Endothelial cell of umbilical vein (primary cell): ENCODE measurements at regions of chr20 and their contacts with region 1.

Region 1: DNA sequence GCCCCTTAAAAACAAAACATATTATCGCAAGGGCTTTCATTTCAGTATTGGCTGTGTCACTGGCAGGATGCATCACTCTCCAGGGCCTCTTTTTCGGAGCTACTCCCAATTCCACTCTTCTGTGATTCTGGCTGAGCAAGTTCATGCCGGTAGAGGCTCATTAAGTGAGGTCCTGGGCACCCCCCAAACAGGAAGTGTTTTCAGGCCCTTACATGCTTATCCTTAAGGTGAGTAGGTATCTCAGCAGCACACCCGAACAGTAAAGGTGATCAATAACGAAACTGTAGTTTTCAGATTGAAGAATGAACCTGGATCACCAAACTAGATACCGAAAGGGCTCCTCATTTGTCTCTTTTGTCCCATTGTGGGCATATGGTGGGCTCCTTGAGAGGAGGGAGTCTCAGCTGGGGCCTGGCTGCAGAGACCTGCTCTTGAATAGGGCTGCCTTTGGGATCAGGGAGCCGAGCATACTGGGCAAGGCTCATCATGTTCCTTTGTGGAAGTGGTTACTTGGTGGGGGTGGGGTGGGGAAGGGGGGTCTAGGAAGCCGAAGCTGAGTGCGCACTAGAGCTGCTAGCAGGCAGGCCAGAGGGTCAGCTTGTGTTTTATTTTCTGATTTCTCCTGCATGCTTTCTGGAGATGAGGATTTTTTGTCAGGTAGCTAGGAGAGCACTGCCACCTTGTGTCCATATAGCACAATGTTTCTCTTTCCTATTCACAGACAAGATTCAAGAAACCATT is 65.2 kb downstream of the CDS2 start:
- DNase-seq: peak; percentile 79
- H3K4me3 ChIP-seq: no peak overlapping the region
- H3K27ac ChIP-seq: no peak overlapping the region
- H3K4me1 ChIP-seq: peaks cover 3% of the 10 kb centered on the region
- H3K27me3 ChIP-seq: no peaks in the 10 kb centered on the region
- CTCF ChIP-seq: peak; percentile 59 to 64
- POLR2A ChIP-seq: no peak

Region 2: DNA sequence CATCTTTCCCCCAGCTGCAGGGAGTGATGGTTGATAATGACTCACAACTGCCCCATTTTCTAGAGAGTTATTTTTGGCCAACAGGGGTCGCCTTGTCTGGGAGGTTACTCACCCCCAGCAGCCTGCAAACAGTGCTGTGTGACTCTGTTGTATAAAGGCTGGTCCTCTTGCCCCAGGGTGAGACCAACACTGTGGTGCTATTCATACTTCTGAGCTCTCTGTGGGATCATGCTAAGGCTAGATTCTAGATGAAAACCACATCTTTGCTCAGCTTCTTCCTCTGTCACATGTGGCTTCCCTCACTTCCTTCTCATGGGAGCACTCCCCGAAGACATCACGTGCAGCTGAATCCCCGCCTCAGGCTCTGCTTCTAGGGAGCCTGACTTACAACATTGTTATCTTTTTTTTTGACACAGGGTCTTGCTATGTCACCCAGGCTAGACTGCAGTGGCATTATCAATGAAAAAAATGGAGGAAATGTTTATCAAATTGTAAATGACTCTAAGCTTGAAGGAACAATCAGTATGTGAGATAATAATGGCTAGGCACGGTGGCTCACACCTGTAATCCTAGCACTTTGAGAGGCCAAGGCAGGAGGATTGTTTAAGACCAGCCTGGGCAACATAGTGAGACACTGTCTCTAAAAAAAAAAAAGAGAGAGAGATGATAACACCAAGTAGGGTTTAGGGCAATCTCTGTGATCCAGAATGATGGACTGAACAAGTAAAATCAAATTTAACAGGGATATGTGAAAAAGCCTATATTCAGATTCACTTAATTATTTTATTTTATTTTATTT is 135.0 kb before region 1 on chr20:
- CTCF ChIA-PET with region 1: interaction called, 7 read pairs
- POLR2A ChIA-PET with region 1: no interaction called
- dilution Hi-C with region 1: no loop called
- intact Hi-C with region 1: loop called (anchors 1 kb)
- DNase-seq: peak; percentile 23
- H3K4me3 ChIP-seq: no peak overlapping the region
- H3K27ac ChIP-seq: no peak overlapping the region
- H3K4me1 ChIP-seq: peaks cover 6% of the 10 kb centered on the region
- H3K27me3 ChIP-seq: no peaks in the 10 kb centered on the region
- CTCF ChIP-seq: peak; percentile 43 to 47
- POLR2A ChIP-seq: no peak

Region 3: DNA sequence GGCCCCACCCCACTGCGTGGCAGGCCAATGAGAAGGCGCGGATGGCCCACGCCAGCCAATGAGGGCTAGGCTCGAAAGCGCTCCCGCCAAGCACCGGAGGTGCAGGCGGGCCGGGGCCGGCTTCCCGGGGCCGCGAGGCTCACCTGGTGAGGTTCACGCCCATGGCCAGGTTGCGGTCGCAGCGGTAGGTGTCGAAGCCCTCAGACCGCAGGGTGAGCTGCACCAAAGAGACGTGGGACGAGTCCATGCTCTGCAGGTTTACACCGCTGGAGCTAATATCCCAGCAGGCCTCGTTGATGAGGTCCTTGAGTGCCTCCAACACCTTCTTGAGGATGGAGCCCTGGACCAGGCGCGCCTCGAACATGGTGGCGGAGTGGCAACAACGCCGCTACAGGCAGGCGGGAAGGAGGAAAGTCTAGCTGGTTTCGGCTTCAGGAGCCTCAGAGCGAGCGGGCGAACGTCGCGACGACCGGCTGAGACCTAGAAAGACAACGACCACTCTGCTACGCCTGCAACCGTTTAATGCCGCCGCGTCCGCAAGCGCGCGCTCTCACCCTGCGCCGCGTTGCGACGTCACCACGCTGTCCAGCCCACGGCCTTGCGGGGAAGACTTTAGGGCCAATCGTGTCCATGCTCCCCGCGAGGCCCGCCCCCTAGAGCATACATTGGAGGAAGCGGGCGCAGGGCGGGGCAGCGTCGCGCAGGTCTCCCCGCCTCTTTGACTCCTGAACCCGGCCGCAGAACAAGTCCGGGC is 72.4 kb before region 1 on chr20 and contains the start of gene PCNA:
- CTCF ChIA-PET with region 1: interaction called, 371 read pairs
- POLR2A ChIA-PET with region 1: interaction called, 6 read pairs
- dilution Hi-C with region 1: no loop called
- intact Hi-C with region 1: loop called (anchors 1 kb)
- DNase-seq: peak; percentile 98
- H3K4me3 ChIP-seq: peak within 1 kb of the TSS; percentile 83 to 95 (median 90)
- H3K27ac ChIP-seq: peak within 1 kb of the TSS; percentile 58
- H3K4me1 ChIP-seq: peaks cover 22% of the 10 kb centered on the region
- H3K27me3 ChIP-seq: no peaks in the 10 kb centered on the region
- CTCF ChIP-seq: no peak
- POLR2A ChIP-seq: peak; percentile 98
- total RNA-seq, gene PCNA: 161 and 175 TPM in 2 replicates

Region 4: DNA sequence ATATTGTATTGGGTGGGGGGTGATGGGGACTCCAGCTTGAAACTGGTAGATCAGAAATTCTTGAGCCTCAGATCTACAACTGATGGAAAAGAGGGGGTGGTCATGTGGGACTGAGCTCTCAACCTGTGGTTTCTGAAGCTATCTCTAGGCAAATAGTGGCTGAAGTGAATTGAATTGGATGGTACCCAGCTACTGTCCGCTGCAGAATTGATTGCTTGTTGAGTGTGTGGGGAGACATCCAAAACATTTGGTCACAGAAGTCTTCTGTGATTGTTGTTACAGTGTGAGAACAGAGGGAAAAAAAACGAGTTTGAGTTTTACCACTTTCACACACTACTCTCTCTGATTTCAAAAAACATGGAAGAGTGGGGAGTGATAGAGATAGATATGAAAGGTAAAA is 50.4 kb before region 1 on chr20:
- CTCF ChIA-PET with region 1: interaction called, 10 read pairs
- POLR2A ChIA-PET with region 1: no interaction called
- dilution Hi-C with region 1: no loop called
- intact Hi-C with region 1: no loop called
- DNase-seq: no peak
- H3K4me3 ChIP-seq: no peak overlapping the region
- H3K27ac ChIP-seq: no peak overlapping the region
- H3K4me1 ChIP-seq: no peaks in the 10 kb centered on the region
- H3K27me3 ChIP-seq: no peaks in the 10 kb centered on the region
- CTCF ChIP-seq: no peak
- POLR2A ChIP-seq: no peak

Region 5: GRCh38 chr20:5156675-5157448 is 35.1 kb before region 1 on chr20:
- CTCF ChIA-PET with region 1: interaction called, 16 read pairs
- POLR2A ChIA-PET with region 1: no interaction called
- dilution Hi-C with region 1: no loop called
- intact Hi-C with region 1: no loop called
- DNase-seq: peak; percentile 45
- H3K4me3 ChIP-seq: no peak overlapping the region
- H3K27ac ChIP-seq: peak overlapping the region; percentile 50
- H3K4me1 ChIP-seq: peaks cover 22% of the 10 kb centered on the region
- H3K27me3 ChIP-seq: no peaks in the 10 kb centered on the region
- CTCF ChIP-seq: no peak
- POLR2A ChIP-seq: no peak

Region 6: GRCh38 chr20:5168651-5169396 is 23.2 kb before region 1 on chr20:
- CTCF ChIA-PET with region 1: interaction called, 23 read pairs
- POLR2A ChIA-PET with region 1: no interaction called
- dilution Hi-C with region 1: no loop called
- intact Hi-C with region 1: no loop called
- DNase-seq: peak; percentile 72
- H3K4me3 ChIP-seq: no peak overlapping the region
- H3K27ac ChIP-seq: peak overlapping the region; percentile 44
- H3K4me1 ChIP-seq: peaks cover 19% of the 10 kb centered on the region
- H3K27me3 ChIP-seq: no peaks in the 10 kb centered on the region
- CTCF ChIP-seq: no peak
- POLR2A ChIP-seq: no peak

Region 7: GRCh38 chr20:5181956-5182355 is 10.0 kb before region 1 on chr20:
- CTCF ChIA-PET with region 1: interaction called, 45 read pairs
- POLR2A ChIA-PET with region 1: no interaction called
- dilution Hi-C with region 1: no loop called
- intact Hi-C with region 1: no loop called
- DNase-seq: peak; percentile 36
- H3K4me3 ChIP-seq: no peak overlapping the region
- H3K27ac ChIP-seq: peak overlapping the region; percentile 39
- H3K4me1 ChIP-seq: peaks cover 19% of the 10 kb centered on the region
- H3K27me3 ChIP-seq: no peaks in the 10 kb centered on the region
- CTCF ChIP-seq: no peak
- POLR2A ChIP-seq: no peak